Body of pancreas (tissue), 4 donors: ENCODE measurements at regions of chr11 and their contacts with region 1.

Region 1: GRCh38 chr11:68263444-68264035 is 8.2 kb downstream of the C11orf24 start:
- DNase-seq: no peak
- ATAC-seq: no peak
- H3K4me3 ChIP-seq: no peak overlapping the region
- H3K27ac ChIP-seq: no peak overlapping the region
- H3K4me1 ChIP-seq: no peaks in the 10 kb centered on the region
- H3K27me3 ChIP-seq: no peaks in the 10 kb centered on the region
- CTCF ChIP-seq: no peak
- POLR2A ChIP-seq: no peak

Region 2: DNA sequence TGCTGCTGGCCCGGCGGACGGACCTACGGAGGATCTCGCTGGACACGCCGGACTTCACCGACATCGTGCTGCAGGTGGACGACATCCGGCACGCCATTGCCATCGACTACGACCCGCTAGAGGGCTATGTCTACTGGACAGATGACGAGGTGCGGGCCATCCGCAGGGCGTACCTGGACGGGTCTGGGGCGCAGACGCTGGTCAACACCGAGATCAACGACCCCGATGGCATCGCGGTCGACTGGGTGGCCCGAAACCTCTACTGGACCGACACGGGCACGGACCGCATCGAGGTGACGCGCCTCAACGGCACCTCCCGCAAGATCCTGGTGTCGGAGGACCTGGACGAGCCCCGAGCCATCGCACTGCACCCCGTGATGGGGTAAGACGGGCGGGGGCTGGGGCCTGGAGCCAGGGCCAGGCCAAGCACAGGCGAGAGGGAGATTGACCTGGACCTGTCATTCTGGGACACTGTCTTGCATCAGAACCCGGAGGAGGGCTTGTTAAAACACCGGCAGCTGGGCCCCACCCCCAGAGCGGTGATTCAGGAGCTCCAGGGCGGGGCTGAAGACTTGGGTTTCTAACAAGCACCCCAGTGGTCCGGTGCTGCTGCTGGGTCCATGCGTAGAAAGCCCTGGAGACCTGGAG is 122.9 kb after region 1 on chr11:
- intact Hi-C with region 1: loop called (anchors 5 kb)
- DNase-seq: no peak
- ATAC-seq: no peak
- H3K4me3 ChIP-seq: no peak overlapping the region
- H3K27ac ChIP-seq: no peak overlapping the region
- H3K4me1 ChIP-seq: peaks cover 8% of the 10 kb centered on the region
- H3K27me3 ChIP-seq: no peaks in the 10 kb centered on the region
- CTCF ChIP-seq: no peak
- POLR2A ChIP-seq: no peak